ENCODE measurements at regions of chr2 and their contacts with region 1.

Region 1: DNA sequence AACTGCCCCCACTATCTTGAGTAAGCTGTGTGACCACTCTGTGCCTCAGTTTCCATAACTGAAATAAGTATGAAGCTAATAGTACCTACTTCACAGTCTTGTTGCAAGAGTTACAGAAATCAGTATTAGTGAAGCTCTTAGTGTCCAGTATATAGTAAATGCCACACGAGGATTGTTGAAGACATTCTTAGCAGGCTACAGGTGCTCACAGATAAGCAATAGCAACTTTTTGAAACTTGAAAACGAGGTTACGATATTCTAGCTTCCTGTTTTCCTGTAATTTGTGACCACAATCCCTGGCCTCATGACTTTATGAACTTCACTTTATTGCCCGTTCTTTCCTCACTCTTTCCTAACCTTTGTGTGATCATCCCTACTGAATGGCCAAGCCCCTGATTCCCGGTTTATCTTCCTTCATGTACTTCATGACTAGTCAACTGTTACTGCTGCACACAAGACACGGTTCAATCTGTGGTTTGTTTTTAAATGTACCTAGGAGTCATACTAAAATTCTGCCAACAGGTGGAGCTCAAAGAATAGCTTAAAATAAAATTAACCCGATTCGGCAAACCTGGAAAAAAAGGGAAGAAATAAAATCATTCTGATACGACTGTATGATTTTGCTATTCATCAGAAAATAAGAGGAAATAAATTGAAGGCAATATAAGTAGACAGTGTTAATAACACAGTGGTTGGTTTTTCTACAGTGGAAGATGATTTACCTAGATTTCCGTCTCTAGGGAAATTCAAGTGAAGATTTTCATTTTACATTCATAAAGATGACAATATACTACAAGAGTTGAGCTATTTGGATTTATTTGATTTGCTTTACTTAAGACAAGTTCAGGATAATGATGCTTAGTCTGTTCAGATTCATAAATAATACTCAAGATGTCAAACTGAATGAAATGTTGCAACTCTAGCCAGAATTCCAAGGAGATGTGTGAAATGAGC is 38.1 kb upstream of the STAT1 start:
- DNase-seq: no peak
- ATAC-seq: peak; percentile 79; the same call in 1 of the 2 replicates
- H3K4me3 ChIP-seq: no peak overlapping the region
- H3K27ac ChIP-seq: no peak overlapping the region
- H3K4me1 ChIP-seq: peaks cover 3% of the 10 kb centered on the region; the same call in 1 of the 2 replicates
- H3K27me3 ChIP-seq: peaks cover 6% of the 10 kb centered on the region; the same call in 1 of the 2 replicates
- CTCF ChIP-seq: peak; percentile 67

Region 2: GRCh38 chr2:191155608-191156071 is 103.5 kb after region 1 on chr2:
- CTCF ChIA-PET with region 1: interaction called, 31 read pairs
- POLR2A ChIA-PET with region 1: interaction called, 3 read pairs
- in situ Hi-C with region 1: no loop called
- intact Hi-C with region 1: loop called (anchors 1 kb)
- DNase-seq: no peak
- ATAC-seq: peak; percentile 79
- H3K4me3 ChIP-seq: no peak overlapping the region
- H3K27ac ChIP-seq: no peak overlapping the region
- H3K4me1 ChIP-seq: no peaks in the 10 kb centered on the region
- H3K27me3 ChIP-seq: peaks cover 7% of the 10 kb centered on the region
- CTCF ChIP-seq: peak; percentile 79

Region 3: DNA sequence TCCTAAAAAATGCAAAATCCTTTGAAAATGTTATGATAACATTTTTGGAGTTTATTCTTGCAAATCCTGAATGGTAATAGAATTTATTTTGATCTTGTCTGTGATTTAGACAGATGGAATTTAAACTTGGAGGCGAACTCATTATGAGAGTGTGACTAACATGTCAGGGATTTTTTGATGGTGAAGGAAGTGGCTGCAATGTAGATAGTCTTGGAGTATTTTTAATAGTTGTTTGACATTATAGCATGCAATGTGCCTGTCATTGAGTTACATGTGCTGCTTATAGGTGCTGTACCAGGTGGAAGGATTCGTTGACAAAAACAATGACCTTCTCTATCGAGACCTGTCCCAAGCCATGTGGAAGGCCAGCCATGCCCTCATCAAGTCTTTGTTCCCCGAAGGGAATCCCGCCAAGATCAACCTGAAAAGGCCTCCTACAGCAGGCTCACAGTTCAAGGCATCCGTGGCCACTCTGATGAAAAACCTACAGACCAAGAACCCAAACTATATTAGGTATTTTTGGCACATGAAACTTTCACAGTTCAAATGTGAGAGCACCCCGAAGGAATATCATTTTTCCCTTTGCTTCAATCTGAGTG is 334.9 kb after region 1 on chr2:
- CTCF ChIA-PET with region 1: no interaction called
- POLR2A ChIA-PET with region 1: no interaction called
- in situ Hi-C with region 1: no loop called
- intact Hi-C with region 1: no loop called
- DNase-seq: no peak
- ATAC-seq: no peak
- H3K4me3 ChIP-seq: no peak overlapping the region
- H3K27ac ChIP-seq: no peak overlapping the region
- H3K4me1 ChIP-seq: no peaks in the 10 kb centered on the region
- H3K27me3 ChIP-seq: no peaks in the 10 kb centered on the region
- CTCF ChIP-seq: no peak